B cell (primary cell): ENCODE measurements at regions of chr10 and their contacts with region 1.

Region 1: DNA sequence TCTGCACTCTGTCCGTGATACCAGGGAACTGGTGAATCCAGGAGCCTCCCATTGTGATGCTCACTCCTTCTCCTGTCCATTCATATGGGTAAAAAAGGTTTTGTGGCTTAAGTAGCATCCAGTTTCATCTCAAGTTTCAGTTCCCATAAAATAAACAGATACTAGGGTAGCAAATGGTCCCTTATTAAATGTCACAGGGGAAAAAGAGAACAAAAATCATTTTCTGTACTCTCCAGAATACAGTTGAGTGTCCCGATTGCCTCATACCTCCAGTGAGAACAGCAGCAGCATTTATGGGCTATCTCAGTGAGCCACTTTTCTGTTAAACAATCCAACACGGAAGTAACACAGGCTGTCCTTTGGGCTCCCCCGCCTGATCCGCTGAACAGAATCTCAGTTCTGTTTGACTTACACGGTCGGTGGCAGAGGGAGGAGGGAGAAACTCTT is 179.6 kb downstream of the CELF2 start:
- DNase-seq: peak; percentile 73
- ATAC-seq: peak; percentile 78
- H3K4me3 ChIP-seq: peak overlapping the region in 1 of 5 experiments; percentile 8
- H3K4me3 Mint-ChIP-seq: peak overlapping the region; percentile 80
- H3K27ac ChIP-seq: peak overlapping the region; percentile 41 to 48
- H3K27ac Mint-ChIP-seq: peak overlapping the region; percentile 88
- H3K4me1 ChIP-seq: peaks cover 53 to 59% of the 10 kb centered on the region in 2 donors
- H3K4me1 Mint-ChIP-seq: peaks cover 91% of the 10 kb centered on the region
- H3K27me3 ChIP-seq: no peaks in the 10 kb centered on the region
- H3K27me3 Mint-ChIP-seq: no peaks in the 10 kb centered on the region
- CTCF ChIP-seq: no peak

Region 2: GRCh38 chr10:11120711-11121110 is 76.6 kb before region 1 on chr10:
- CTCF ChIA-PET with region 1: no interaction called
- POLR2A ChIA-PET with region 1: no interaction called
- intact Hi-C with region 1: no loop called
- DNase-seq: no peak
- ATAC-seq: no peak
- H3K4me3 ChIP-seq: no peak overlapping the region
- H3K4me3 Mint-ChIP-seq: no peak overlapping the region
- H3K27ac ChIP-seq: no peak overlapping the region
- H3K27ac Mint-ChIP-seq: no peak overlapping the region
- H3K4me1 ChIP-seq: no peaks in the 10 kb centered on the region
- H3K4me1 Mint-ChIP-seq: no peaks in the 10 kb centered on the region
- H3K27me3 ChIP-seq: no peaks in the 10 kb centered on the region
- H3K27me3 Mint-ChIP-seq: peaks cover 3% of the 10 kb centered on the region
- CTCF ChIP-seq: no peak

Region 3: GRCh38 chr10:11178606-11179515 is 18.4 kb before region 1 on chr10:
- CTCF ChIA-PET with region 1: interaction called, 5 read pairs
- POLR2A ChIA-PET with region 1: interaction called, 5 read pairs
- intact Hi-C with region 1: loop called (anchors 2 kb)
- DNase-seq: peak; percentile 85
- ATAC-seq: peak; percentile 73
- H3K4me3 ChIP-seq: peak overlapping the region in 4 of 5 experiments; percentile 3 to 43 (median 18)
- H3K4me3 Mint-ChIP-seq: peak overlapping the region; percentile 81
- H3K27ac ChIP-seq: peak overlapping the region; percentile 63 to 87
- H3K27ac Mint-ChIP-seq: peak overlapping the region; percentile 94
- H3K4me1 ChIP-seq: peaks cover 96% of the 10 kb centered on the region in 2 donors
- H3K4me1 Mint-ChIP-seq: peaks cover 97% of the 10 kb centered on the region
- H3K27me3 ChIP-seq: no peaks in the 10 kb centered on the region
- H3K27me3 Mint-ChIP-seq: no peaks in the 10 kb centered on the region
- CTCF ChIP-seq: no peak

Region 4: GRCh38 chr10:11186374-11186773 is 10.9 kb before region 1 on chr10:
- CTCF ChIA-PET with region 1: interaction called, 3 read pairs
- POLR2A ChIA-PET with region 1: no interaction called
- intact Hi-C with region 1: loop called (anchors 1 kb)
- DNase-seq: peak; percentile 47
- ATAC-seq: no peak
- H3K4me3 ChIP-seq: peak overlapping the region in 1 of 5 experiments; percentile 9
- H3K4me3 Mint-ChIP-seq: no peak overlapping the region
- H3K27ac ChIP-seq: peak overlapping the region in 1 of 2 donors; percentile 49
- H3K27ac Mint-ChIP-seq: peak overlapping the region; percentile 13
- H3K4me1 ChIP-seq: peaks cover 54 to 77% of the 10 kb centered on the region in 2 donors
- H3K4me1 Mint-ChIP-seq: peaks cover 85% of the 10 kb centered on the region
- H3K27me3 ChIP-seq: no peaks in the 10 kb centered on the region
- H3K27me3 Mint-ChIP-seq: no peaks in the 10 kb centered on the region
- CTCF ChIP-seq: no peak

Region 5: DNA sequence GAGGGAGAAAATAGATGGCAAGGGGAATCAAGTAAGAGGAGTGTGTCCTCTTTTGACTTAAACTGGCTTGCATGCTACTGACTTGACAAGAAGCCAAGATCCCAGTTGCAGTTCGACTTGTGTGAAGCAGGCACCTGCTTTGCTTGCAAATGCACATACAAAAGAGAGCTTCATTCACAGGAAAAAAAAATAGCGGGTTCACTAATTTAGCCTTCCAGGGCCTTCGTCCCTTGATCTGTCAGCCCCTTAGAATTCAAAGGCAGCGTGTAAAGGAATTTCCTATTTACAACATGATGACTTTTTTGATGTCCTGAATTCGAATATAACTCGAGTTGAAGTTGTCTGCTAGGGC is 12.5 kb after region 1 on chr10:
- CTCF ChIA-PET with region 1: interaction called, 4 read pairs
- POLR2A ChIA-PET with region 1: no interaction called
- intact Hi-C with region 1: loop called (anchors 1 kb)
- DNase-seq: no peak
- ATAC-seq: peak; percentile 22
- H3K4me3 ChIP-seq: peak overlapping the region in 4 of 5 experiments; percentile 0 to 43 (median 6)
- H3K4me3 Mint-ChIP-seq: peak overlapping the region; percentile 66
- H3K27ac ChIP-seq: peak overlapping the region; percentile 28 to 80
- H3K27ac Mint-ChIP-seq: peak overlapping the region; percentile 51
- H3K4me1 ChIP-seq: peaks cover 68% of the 10 kb centered on the region in 2 donors
- H3K4me1 Mint-ChIP-seq: peaks cover 83% of the 10 kb centered on the region
- H3K27me3 ChIP-seq: no peaks in the 10 kb centered on the region
- H3K27me3 Mint-ChIP-seq: no peaks in the 10 kb centered on the region
- CTCF ChIP-seq: no peak

Region 6: GRCh38 chr10:11242443-11243387 is 45.4 kb after region 1 on chr10:
- CTCF ChIA-PET with region 1: interaction called, 4 read pairs
- POLR2A ChIA-PET with region 1: interaction called, 4 read pairs
- intact Hi-C with region 1: loop called (anchors 5 kb)
- DNase-seq: peak; percentile 75
- ATAC-seq: peak; percentile 61
- H3K4me3 ChIP-seq: peak overlapping the region in 4 of 5 experiments; percentile 28 to 58 (median 40)
- H3K4me3 Mint-ChIP-seq: peak overlapping the region; percentile 91
- H3K27ac ChIP-seq: peak overlapping the region; percentile 66 to 80
- H3K27ac Mint-ChIP-seq: peak overlapping the region; percentile 97
- H3K4me1 ChIP-seq: peaks cover 82 to 85% of the 10 kb centered on the region in 2 donors
- H3K4me1 Mint-ChIP-seq: peaks cover 52% of the 10 kb centered on the region
- H3K27me3 ChIP-seq: no peaks in the 10 kb centered on the region
- H3K27me3 Mint-ChIP-seq: no peaks in the 10 kb centered on the region
- CTCF ChIP-seq: no peak